ENCODE measurements at regions of chr2 and their contacts with region 1.

Region 1: DNA sequence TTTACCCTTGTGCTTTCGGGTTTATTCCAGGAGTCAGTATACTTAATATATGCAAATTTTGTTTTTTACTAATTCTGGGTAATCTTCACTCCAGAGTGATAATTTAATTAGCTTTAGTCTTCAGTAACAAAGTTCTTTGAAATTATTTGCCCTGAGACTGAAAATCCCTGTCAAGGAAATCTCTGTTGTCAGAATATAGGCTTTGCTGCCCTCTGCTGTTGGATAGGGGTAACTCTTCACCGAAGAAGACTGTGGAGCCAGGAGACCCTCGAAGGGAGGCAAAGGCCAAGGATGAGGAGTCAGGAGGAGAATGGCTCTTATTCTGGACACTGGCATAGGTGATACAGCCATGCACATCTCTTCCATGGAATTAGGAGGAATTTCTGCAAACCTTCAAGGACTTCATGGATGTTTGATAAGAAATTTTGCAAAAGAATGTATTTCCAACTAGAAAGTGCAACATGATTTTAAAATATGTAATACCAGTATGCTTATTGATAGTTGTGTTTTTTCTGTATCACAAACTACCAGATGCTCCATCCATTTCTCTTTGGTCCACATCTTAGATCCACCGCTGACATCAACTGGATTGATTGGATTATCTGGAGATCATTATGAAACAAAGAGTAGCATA is 182.3 kb downstream of the RDH14 start:
- DNase-seq: no peak

Region 2: GRCh38 chr2:17851731-17852585 is 526.2 kb before region 1 on chr2:
- intact Hi-C with region 1: loop called (anchors 2 kb)
- DNase-seq: no peak

Region 3: DNA sequence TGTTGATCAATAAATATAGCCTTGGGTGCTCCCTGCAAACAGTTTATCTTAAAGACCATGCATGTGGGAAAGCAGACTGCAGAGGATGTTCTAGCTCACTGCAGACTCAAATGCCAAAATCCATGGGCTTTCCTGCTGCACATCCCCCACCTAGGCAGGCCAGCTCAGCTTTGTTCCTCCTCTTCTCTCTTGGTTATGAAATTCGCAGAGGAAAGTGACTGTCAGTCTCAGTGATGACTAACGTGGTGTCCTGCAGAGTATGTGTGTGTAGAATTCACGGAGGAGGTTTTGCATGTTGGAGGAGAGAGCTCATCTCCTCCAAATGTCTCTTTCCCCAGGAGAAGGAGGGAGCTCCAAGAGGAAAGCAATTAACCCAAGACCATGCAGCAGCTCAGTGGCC is 521.1 kb before region 1 on chr2:
- intact Hi-C with region 1: loop called (anchors 2 kb)
- DNase-seq: no peak

Region 4: GRCh38 chr2:18178736-18179349 is 199.3 kb before region 1 on chr2:
- intact Hi-C with region 1: loop called (anchors 10 kb)
- DNase-seq: no peak

Region 5: DNA sequence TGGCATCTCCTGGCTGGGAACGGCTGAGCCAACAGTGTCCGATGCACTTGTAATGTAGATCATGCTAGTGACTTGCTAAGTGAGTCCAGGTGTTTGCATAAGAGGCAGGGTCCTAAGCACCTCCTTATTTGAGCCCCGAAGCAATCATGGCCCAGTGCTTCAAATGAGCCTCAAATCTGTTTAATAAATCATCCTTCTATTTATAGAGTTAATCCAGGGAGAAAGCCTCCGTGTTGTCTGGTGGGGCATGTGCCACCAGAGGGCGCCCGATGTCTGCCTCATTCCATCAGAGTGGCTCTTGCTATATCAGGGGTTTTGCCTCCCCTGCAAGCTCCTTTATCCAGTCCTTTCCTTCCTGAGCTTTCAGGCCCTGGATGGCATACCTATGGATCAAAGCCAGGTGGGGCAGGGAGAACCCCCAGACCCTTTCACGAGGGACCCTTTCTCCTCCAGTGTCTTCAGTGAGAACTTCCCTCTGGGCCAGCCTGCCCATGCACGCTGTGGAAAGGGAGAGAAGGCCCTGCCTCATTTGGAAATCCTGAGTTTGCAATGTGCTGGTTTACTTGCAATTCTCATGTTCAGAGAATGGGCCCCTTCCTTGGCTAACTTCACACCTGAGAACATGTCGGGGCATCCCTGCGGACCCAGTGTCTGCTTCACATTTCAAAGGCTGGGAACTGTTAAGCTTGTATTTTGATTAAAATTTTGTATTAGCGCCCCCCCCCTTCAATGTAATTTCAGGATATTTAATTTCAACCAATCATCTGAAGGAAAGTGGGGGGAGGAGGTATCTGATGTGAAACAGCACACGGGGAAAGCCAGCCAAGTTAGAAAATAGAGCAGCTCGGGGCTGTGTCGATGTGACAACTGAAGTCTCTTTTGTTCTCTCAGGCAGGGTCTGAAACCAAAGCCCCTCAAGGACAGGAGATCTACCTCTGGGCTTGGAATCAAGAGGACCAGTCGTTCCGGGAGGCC is 142.6 kb after region 1 on chr2:
- intact Hi-C with region 1: no loop called
- DNase-seq: peak; percentile 91